ENCODE measurements at regions of chr18 and their contacts with region 1.

Region 1: DNA sequence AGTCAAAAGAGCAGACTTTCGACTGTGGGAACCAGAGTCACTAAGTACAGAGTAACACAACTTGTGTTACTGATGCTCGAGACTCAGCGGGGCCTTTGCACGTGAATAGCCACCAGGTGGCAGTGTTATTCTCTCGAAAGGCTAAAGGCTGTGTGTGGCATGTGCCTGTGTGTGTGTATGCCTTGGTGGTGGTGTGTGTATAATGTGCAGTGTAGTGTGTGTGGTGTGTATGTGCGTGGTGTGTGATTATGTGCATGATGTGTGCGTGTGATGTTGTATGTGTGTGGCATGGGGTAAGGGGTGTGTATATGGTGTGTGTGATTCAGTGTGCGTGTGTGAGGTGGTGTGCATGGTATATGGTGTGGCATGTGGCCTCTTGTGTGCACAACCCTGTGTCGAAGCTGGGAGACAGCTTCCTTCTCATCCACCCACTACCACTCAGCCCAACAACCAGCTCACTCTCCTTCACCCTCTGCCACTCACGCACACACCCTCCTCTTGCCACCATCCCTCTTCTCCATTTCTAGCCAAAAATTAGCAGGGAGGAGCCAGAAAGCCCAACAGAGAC is 83.0 kb upstream of the ZNF532 start:
- DNase-seq: peak; percentile 90
- H3K4me3 ChIP-seq: no peak overlapping the region
- H3K27ac ChIP-seq: peak overlapping the region; percentile 86 to 95
- H3K4me1 ChIP-seq: peaks cover 16% of the 10 kb centered on the region
- H3K27me3 ChIP-seq: no peaks in the 10 kb centered on the region
- CTCF ChIP-seq: peak; percentile 92 to 99 (median 98)
- POLR2A ChIP-seq: no peak

Region 2: DNA sequence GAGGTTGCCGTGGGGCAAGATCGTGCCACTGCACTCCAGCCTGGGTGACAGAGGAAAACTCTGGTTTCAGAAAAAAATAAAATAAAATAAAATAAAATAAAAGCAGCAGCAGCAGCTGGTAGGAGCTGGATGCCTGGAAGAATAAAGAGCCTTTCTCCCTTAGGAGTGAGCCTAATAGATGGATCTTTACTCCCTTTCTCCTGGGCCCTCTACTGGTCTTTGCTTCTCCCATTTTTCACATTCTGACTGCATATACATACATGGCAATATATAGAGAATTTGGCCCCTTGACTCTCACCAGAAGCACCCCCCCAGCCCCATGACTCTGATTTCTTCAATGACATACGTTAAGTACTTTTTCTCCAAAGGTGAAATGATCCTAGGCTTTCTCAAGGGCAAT is 120.3 kb before region 1 on chr18:
- intact Hi-C with region 1: no loop called
- DNase-seq: no peak
- H3K4me3 ChIP-seq: no peak overlapping the region
- H3K27ac ChIP-seq: no peak overlapping the region
- H3K4me1 ChIP-seq: no peaks in the 10 kb centered on the region
- H3K27me3 ChIP-seq: no peaks in the 10 kb centered on the region
- CTCF ChIP-seq: no peak
- POLR2A ChIP-seq: no peak

Region 3: DNA sequence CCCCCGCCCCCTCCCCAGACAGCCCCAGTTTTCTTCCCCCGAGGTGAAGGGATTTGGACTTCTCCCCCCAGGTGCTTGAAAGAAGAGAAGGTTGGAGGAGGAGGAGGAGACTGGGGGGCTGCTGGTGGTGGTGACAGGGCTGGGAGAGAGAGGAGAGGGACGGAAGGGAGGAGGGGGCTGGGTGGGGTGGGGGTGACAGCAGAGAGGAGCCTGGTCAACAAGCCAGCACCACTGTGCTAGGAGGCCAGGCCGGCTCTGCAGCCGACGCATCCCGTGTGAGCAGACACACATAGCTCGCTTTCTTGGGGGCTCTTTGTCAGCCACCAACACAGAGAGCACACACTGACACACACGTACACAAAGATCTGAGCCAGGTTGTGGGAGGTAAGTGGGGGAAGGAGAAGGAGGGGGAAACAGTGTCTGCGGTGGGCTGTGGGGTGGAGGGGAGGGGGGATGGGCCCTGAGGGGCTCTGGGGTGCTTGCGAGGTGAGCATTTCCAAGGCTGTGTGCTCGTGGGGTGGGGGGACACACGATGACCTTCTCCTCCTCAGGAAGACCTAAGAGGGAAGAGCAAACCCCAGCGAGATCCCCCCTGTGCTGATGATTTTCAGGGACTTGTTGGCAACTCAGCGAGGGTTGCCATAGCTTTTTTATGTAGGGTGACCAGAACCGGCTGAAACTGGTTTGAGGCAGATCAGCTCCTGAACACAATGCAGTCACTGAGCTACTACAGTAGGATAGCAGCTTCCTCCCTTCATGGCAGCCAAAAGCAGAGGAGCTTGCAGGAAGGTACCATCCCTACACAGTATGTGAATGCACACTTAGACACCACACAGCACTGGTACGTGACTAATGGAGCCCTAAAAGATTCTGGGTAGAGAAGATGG is 82.7 kb after region 1 on chr18 and contains the start of gene ZNF532:
- intact Hi-C with region 1: loop called (anchors 5 kb)
- DNase-seq: peak; percentile 63
- H3K4me3 ChIP-seq: peak within 1 kb of the TSS; percentile 31 to 55
- H3K27ac ChIP-seq: peak within 1 kb of the TSS; percentile 98 to 100
- H3K4me1 ChIP-seq: peaks cover 12% of the 10 kb centered on the region
- H3K27me3 ChIP-seq: no peaks in the 10 kb centered on the region
- CTCF ChIP-seq: no peak
- POLR2A ChIP-seq: no peak
- total RNA-seq, gene ZNF532: 231 to 299 TPM

Region 4: DNA sequence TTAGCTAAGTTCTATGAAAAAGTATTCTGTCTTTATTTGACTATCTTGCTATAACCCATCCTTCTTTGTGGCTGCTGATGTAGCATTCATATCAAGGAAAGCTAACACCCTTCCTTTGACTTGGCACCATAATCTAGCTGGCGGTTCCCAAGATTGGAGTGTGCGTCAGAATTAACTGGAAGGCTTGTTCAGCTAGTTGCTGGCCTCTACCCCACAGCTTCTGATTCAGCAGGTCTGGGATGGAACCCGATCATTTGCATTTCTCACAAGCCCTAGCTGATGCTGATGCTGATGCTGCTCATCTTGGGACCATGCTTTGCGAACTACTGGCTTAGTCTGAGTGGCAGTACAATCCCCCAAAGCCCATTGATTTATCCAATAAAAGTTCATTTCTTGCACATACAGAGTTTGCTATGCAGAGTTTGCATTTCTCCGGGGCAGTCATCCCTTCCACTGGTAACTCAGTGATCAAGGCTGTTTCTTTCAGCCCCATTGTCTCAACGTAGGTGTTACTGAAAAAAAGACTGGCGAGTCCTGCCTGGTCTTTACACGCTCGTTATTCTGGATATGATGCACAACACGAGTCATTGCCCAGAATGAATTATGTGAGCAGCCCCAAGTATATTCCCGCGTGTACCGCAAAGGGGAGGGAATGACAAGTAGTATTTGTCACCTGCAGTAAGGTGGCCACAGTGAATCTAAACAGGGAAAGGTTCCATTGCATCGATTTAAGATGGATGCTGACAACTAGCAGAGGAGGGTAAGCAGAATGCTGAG is 179.4 kb after region 1 on chr18:
- intact Hi-C with region 1: loop called (anchors 10 kb)
- DNase-seq: no peak
- H3K4me3 ChIP-seq: no peak overlapping the region
- H3K27ac ChIP-seq: peak overlapping the region; percentile 82 to 87
- H3K4me1 ChIP-seq: no peaks in the 10 kb centered on the region
- H3K27me3 ChIP-seq: no peaks in the 10 kb centered on the region
- CTCF ChIP-seq: no peak
- POLR2A ChIP-seq: no peak

Region 5: DNA sequence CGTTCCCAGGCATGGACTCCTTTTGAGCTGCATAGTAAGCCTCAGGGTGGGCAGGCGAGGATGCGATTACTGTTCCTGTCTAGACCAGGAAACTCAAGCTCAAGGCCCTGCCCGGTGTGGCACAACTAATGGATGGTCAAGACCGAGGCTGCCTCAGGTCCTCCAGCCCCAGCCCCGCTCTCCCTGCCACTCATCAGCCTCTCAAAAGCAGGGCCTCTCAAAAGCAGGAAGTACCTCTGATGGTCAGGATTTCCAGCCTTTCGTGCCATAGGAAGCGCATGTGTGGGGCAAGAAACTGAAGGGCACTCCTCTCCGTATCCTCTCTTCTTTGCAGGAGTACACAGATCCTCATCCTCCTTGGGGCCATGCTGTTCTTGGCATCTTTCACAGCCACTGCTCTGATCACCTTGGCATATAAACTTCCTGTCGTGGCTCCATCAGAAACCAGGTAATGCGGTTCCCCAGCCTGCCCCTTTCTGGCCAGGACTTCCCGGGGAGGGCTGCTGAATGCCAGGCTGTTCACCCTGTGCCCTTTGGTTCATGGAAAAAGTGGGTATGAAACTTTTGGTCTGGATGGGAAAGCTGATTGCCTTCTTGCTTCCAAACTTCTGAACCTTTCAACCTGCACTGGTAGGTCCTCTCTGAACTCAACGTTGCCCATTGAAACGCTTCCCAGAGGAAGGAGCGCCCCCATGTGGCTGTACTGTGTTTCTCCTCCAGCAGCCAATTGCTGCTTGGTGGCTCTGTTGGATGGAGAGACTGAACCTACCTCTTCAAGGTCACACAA is 275.2 kb after region 1 on chr18:
- intact Hi-C with region 1: loop called (anchors 1 kb)
- DNase-seq: no peak
- H3K4me3 ChIP-seq: no peak overlapping the region
- H3K27ac ChIP-seq: peak overlapping the region; percentile 90 to 95
- H3K4me1 ChIP-seq: peaks cover 18% of the 10 kb centered on the region
- H3K27me3 ChIP-seq: no peaks in the 10 kb centered on the region
- CTCF ChIP-seq: peak; percentile 61 to 93 (median 66)
- POLR2A ChIP-seq: no peak

Region 6: DNA sequence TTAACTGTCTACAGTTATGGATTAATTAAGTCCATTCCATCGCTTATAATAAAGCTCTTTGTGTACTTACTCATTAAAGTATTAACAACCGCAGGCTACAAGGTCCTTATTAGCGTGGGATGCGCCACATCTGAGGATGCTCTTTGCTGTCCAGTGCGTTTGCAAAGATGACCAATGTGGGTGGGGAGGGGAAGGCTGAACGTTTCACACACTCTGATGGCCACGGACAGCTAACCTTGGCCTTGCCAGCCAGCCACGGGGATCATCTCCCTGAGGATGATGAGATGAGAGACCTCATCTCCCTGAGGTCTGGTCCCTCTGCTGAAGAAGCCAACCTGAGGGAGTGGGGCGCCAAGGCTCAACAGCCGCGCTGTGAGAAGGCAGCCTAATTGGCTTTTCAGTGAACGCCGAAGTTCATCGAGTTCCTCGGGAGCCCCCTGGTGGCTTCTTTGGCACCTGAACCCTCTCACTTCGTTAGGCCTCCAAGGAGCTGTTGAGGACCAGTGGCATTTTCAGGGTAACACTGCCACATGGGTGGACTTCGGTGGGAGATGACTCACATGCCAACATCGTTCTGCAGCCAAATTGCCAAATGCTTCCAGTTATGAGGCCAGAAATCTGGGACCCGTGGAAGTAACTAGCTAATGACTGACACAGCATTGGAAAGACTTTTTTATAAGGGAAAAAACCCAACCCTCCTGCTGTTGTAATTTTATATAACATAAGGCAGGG is 288.6 kb after region 1 on chr18:
- intact Hi-C with region 1: loop called (anchors 1 kb)
- DNase-seq: peak; percentile 88
- H3K4me3 ChIP-seq: no peak overlapping the region
- H3K27ac ChIP-seq: peak overlapping the region; percentile 83 to 95
- H3K4me1 ChIP-seq: no peaks in the 10 kb centered on the region
- H3K27me3 ChIP-seq: no peaks in the 10 kb centered on the region
- CTCF ChIP-seq: peak; percentile 76 to 94 (median 91)
- POLR2A ChIP-seq: no peak